ENCODE measurements at regions of chr3 and their contacts with region 1.

Region 1: DNA sequence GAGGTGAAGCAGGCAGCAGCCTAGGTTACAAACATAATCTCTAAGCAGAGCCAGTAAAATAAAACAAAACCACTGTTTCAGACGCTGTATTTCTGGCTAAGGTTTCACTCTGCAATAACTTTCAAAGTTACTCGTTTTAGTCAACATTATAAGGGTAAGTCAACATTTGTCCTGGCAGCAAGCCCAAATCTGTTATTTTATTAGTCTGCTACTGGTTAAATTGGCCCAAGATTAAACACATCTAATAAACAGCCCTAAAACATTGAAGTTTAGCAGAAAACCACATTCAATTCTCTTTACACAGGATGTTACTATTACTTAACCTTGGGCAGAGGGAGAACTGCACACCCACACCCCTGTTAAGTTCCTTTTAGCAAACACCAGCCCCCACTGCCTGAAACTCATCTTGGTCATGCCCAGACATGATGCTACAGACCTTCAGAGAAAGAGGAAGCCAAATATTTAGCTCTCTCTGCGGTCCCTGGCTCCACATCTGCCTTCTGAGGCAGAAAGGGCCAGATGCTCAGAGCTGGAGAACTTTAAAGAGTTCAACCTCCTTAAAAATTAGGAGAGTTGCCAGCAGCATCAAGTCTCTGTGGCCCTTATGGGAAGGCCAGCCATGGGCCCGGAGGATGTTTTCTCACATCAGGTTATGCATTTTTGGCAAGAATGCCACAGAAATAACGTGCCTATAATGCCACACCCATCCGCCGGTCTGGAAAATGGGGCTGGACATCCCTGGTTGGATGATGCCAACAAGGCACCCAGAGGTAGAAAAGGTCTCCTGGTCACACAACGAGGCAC is 17.9 kb downstream of the ARHGEF3 start:
- H3K4me3 Mint-ChIP-seq: peak overlapping the region; percentile 49
- H3K27ac Mint-ChIP-seq: peak overlapping the region; percentile 89
- H3K4me1 Mint-ChIP-seq: peaks cover 85% of the 10 kb centered on the region
- H3K27me3 Mint-ChIP-seq: no peaks in the 10 kb centered on the region

Region 2: DNA sequence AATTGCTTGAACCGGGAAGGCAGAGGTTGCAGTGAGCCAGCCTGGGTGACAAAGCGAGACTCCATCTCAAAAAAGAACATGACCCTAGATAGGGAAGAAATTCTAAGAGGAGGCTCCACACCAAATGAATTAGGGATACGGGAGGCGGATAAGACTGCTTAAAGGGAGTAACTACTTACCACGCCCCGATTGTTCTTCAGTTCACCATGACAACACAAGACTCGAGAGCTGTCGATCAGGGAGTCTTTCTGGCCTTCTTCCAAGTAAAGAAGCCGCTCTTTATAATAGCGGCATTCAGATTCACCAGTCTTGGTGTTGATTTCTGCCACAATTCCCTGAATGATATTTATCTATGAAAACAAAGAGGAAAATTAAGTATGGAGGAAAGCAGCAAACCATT is 46.8 kb before region 1 on chr3:
- intact Hi-C with region 1: no loop called
- H3K4me3 Mint-ChIP-seq: no peak overlapping the region
- H3K27ac Mint-ChIP-seq: no peak overlapping the region
- H3K4me1 Mint-ChIP-seq: peaks cover 9% of the 10 kb centered on the region
- H3K27me3 Mint-ChIP-seq: no peaks in the 10 kb centered on the region

Region 3: DNA sequence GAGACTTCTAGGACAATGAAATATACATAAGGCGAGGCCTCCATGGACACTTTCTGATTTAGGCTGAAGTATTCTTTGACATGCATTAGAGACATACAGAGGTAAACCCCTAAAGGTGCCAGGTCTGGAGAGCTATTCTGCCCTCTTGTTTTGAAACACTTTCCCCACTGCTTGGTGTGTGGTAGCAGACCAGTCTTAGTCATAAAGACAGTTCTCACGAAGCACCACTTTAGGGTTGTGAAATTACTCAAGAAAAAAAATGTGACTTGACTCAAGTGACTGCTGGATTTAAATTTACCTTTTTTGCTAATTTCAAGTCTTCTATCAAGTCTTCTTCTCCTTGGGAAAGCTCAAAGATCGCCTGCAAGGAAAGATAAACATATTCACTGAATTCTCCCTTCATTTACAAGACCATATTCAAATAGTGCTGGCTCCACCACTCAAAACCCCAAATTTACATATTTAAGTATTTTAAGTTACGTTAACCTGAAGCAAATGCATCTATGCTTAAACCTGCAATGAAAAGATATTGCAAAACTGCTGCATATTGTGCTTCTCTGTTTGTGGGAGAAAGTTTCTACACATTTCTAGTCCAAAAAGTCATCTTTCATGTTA is 30.5 kb before region 1 on chr3:
- intact Hi-C with region 1: loop called (anchors 2 kb)
- H3K4me3 Mint-ChIP-seq: no peak overlapping the region
- H3K27ac Mint-ChIP-seq: peak overlapping the region; percentile 98
- H3K4me1 Mint-ChIP-seq: peaks cover 68% of the 10 kb centered on the region
- H3K27me3 Mint-ChIP-seq: no peaks in the 10 kb centered on the region

Region 4: GRCh38 chr3:56796202-56796601 is 12.4 kb after region 1 on chr3:
- intact Hi-C with region 1: loop called (anchors 2 kb)
- H3K4me3 Mint-ChIP-seq: no peak overlapping the region
- H3K27ac Mint-ChIP-seq: peak overlapping the region; percentile 37
- H3K4me1 Mint-ChIP-seq: peaks cover 53% of the 10 kb centered on the region
- H3K27me3 Mint-ChIP-seq: no peaks in the 10 kb centered on the region

Measured in dendritic cell treated with granulocyte-macrophage colony-stimulating factor and Interleukin-4, amounts not matched to agents 40 ng/mL and 50 ng/mL, for 4 days (primary cell).